Activated CD8-positive, alpha-beta T cell treated with anti-CD3 and anti-CD28 coated beads for 36 hours (primary cell): ENCODE measurements at regions of chr2 and their contacts with region 1.

Region 1: GRCh38 chr2:161166538-161167409 is 6.5 kb downstream of the TANK start:
- DNase-seq: peak; percentile 87
- ATAC-seq: peak; percentile 89
- H3K4me3 Mint-ChIP-seq: peak overlapping the region; percentile 47
- H3K27ac Mint-ChIP-seq: peak overlapping the region; percentile 92
- H3K4me1 Mint-ChIP-seq: peaks cover 90% of the 10 kb centered on the region
- H3K27me3 Mint-ChIP-seq: no peaks in the 10 kb centered on the region
- CTCF ChIP-seq: no peak

Region 2: DNA sequence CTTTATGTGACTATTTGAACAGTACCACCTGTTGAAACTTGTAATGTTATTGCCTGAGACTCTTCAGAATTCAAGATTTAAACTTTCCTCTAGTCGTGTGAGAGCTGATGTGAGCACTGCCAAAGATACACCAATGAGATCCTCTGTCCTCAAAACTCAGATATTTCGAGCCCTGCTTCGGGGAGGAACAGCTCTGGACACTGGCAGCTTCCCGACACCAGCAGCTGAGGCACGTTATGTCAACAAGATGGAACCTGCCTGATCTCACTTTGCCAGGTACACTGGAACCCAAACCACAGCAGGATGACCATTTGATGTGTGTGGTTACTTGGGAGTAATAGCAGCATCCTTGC is 353.3 kb before region 1 on chr2:
- CTCF ChIA-PET with region 1: no interaction called
- POLR2A ChIA-PET with region 1: no interaction called
- intact Hi-C with region 1: no loop called
- DNase-seq: no peak
- ATAC-seq: no peak
- H3K4me3 Mint-ChIP-seq: no peak overlapping the region
- H3K27ac Mint-ChIP-seq: no peak overlapping the region
- H3K4me1 Mint-ChIP-seq: no peaks in the 10 kb centered on the region
- H3K27me3 Mint-ChIP-seq: no peaks in the 10 kb centered on the region
- CTCF ChIP-seq: no peak

Region 3: GRCh38 chr2:161077367-161078210 is 89.2 kb before region 1 on chr2:
- CTCF ChIA-PET with region 1: interaction called, 3 read pairs
- POLR2A ChIA-PET with region 1: interaction called, 4 read pairs
- intact Hi-C with region 1: loop called (anchors 5 kb)
- DNase-seq: peak; percentile 92
- ATAC-seq: peak; percentile 85
- H3K4me3 Mint-ChIP-seq: peak overlapping the region; percentile 25
- H3K27ac Mint-ChIP-seq: peak overlapping the region; percentile 87
- H3K4me1 Mint-ChIP-seq: peaks cover 47% of the 10 kb centered on the region
- H3K27me3 Mint-ChIP-seq: no peaks in the 10 kb centered on the region
- CTCF ChIP-seq: no peak